Endothelial cell of umbilical vein (primary cell): ENCODE measurements at regions of chr5 and their contacts with region 1.

Region 1: GRCh38 chr5:154986151-154986550 is 27.4 kb upstream of the KIF4B start:
- DNase-seq: no peak
- H3K4me3 ChIP-seq: no peak overlapping the region
- H3K27ac ChIP-seq: no peak overlapping the region
- H3K4me1 ChIP-seq: peaks cover 10% of the 10 kb centered on the region
- H3K27me3 ChIP-seq: no peaks in the 10 kb centered on the region
- CTCF ChIP-seq: no peak
- POLR2A ChIP-seq: no peak

Region 2: DNA sequence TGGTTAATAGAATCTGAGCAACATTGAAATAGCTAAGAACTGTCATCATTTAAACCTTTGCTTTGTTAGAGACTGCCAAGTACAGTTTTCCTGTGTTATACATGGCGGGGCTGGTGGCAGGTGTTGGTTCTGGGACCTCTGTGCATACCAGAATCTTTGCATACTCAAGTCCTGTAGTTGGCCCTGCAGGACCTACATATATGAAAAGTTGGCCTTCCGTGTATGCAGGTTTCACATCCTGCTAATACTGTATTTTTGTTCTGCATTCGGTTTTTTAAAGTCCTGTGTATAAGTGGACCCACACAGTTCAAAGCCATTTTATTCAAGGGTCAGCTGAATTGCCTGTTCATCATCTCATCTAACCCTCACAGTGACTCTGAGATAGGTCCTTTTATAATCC is 194.6 kb before region 1 on chr5:
- CTCF ChIA-PET with region 1: no interaction called
- POLR2A ChIA-PET with region 1: no interaction called
- dilution Hi-C with region 1: no loop called
- intact Hi-C with region 1: no loop called
- DNase-seq: no peak
- H3K4me3 ChIP-seq: no peak overlapping the region
- H3K27ac ChIP-seq: no peak overlapping the region
- H3K4me1 ChIP-seq: peaks cover 20% of the 10 kb centered on the region
- H3K27me3 ChIP-seq: no peaks in the 10 kb centered on the region
- CTCF ChIP-seq: no peak
- POLR2A ChIP-seq: no peak

Region 3: GRCh38 chr5:155004138-155004744 is 18.1 kb after region 1 on chr5:
- CTCF ChIA-PET with region 1: interaction called, 8 read pairs
- POLR2A ChIA-PET with region 1: no interaction called
- dilution Hi-C with region 1: no loop called
- intact Hi-C with region 1: loop called (anchors 1 kb)
- DNase-seq: peak; percentile 56
- H3K4me3 ChIP-seq: no peak overlapping the region
- H3K27ac ChIP-seq: no peak overlapping the region
- H3K4me1 ChIP-seq: peaks cover 4% of the 10 kb centered on the region
- H3K27me3 ChIP-seq: no peaks in the 10 kb centered on the region
- CTCF ChIP-seq: peak; percentile 60 to 73
- POLR2A ChIP-seq: no peak

Region 4: GRCh38 chr5:155136216-155136850 is 150.2 kb after region 1 on chr5:
- CTCF ChIA-PET with region 1: no interaction called
- POLR2A ChIA-PET with region 1: no interaction called
- dilution Hi-C with region 1: no loop called
- intact Hi-C with region 1: no loop called
- DNase-seq: no peak
- H3K4me3 ChIP-seq: no peak overlapping the region
- H3K27ac ChIP-seq: no peak overlapping the region
- H3K4me1 ChIP-seq: no peaks in the 10 kb centered on the region
- H3K27me3 ChIP-seq: peaks cover 0 to 2% of the 10 kb centered on the region in 2 experiments
- CTCF ChIP-seq: no peak
- POLR2A ChIP-seq: no peak

Region 5: DNA sequence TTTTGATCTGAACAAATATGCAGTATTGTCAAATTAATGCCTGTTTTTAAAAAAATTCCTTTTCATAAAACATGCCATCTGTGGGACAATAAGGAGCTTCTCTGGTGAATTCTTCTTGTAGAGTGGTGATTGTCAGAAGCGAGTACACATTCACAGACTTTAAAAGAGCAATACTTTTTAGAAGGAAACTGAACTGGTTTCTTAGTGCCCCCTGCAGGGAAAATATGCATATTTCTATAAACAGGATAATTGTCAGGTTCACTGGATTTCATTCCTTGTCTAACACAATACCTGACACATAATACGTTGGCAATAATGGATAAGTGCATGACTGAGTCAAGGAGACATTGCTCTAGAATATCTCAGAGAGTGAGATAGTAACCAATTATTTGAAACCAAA is 161.1 kb after region 1 on chr5:
- CTCF ChIA-PET with region 1: interaction called, 3 read pairs
- POLR2A ChIA-PET with region 1: no interaction called
- dilution Hi-C with region 1: no loop called
- intact Hi-C with region 1: loop called (anchors 5 kb)
- DNase-seq: peak; percentile 31
- H3K4me3 ChIP-seq: no peak overlapping the region
- H3K27ac ChIP-seq: no peak overlapping the region
- H3K4me1 ChIP-seq: no peaks in the 10 kb centered on the region
- H3K27me3 ChIP-seq: peaks cover 6 to 10% of the 10 kb centered on the region in 2 experiments
- CTCF ChIP-seq: no peak
- POLR2A ChIP-seq: no peak